Sigmoid colon (tissue), 7 donors: ENCODE measurements at regions of chr4 and their contacts with region 1.

Region 1: GRCh38 chr4:88456757-88457306 is at the start of gene HERC5:
- DNase-seq: peak; percentile 94
- H3K4me3 ChIP-seq: peak within 1 kb of the TSS; percentile 49 to 80 (median 62)
- H3K27ac ChIP-seq: peak within 1 kb of the TSS; percentile 75 to 85 (median 82)
- H3K4me1 ChIP-seq: peaks cover 0 to 9% (median 2%) of the 10 kb centered on the region in 4 donors
- H3K27me3 ChIP-seq: no peaks in the 10 kb centered on the region
- CTCF ChIP-seq: peak; percentile 58 to 67 (median 64)
- EP300 ChIP-seq: peak in 1 of 4 donors; percentile 7
- POLR2A ChIP-seq: peak in 1 of 2 donors; percentile 11
- total RNA-seq, gene HERC5: 4.8 to 7.5 (median 6.0) TPM

Region 2: GRCh38 chr4:88217920-88218319 is 238.9 kb before region 1 on chr4:
- intact Hi-C with region 1: loop called (anchors 2 kb)
- DNase-seq: no peak
- H3K4me3 ChIP-seq: no peak overlapping the region
- H3K27ac ChIP-seq: no peak overlapping the region
- H3K4me1 ChIP-seq: peaks cover 0 to 3% (median 0%) of the 10 kb centered on the region in 4 donors
- H3K27me3 ChIP-seq: no peaks in the 10 kb centered on the region
- CTCF ChIP-seq: no peak
- EP300 ChIP-seq: no peak
- POLR2A ChIP-seq: no peak

Region 3: GRCh38 chr4:88378691-88379559 is 77.9 kb before region 1 on chr4 and contains the start of gene HERC6:
- intact Hi-C with region 1: loop called (anchors 2 kb)
- DNase-seq: peak; percentile 89
- H3K4me3 ChIP-seq: peak within 1 kb of the TSS; percentile 88 to 100 (median 98)
- H3K27ac ChIP-seq: peak within 1 kb of the TSS; percentile 89 to 95 (median 92)
- H3K4me1 ChIP-seq: no peaks in the 10 kb centered on the region
- H3K27me3 ChIP-seq: no peaks in the 10 kb centered on the region
- CTCF ChIP-seq: peak; percentile 60 to 87 (median 70)
- EP300 ChIP-seq: no peak
- POLR2A ChIP-seq: no peak
- total RNA-seq, gene HERC6: 5.7 to 8.6 (median 7.4) TPM

Region 4: GRCh38 chr4:88823058-88823919 is 366.5 kb after region 1 on chr4:
- intact Hi-C with region 1: no loop called
- DNase-seq: peak; percentile 97
- H3K4me3 ChIP-seq: peak overlapping the region; percentile 43 to 60 (median 52)
- H3K27ac ChIP-seq: peak overlapping the region; percentile 82 to 92 (median 88)
- H3K4me1 ChIP-seq: peaks cover 0 to 43% (median 35%) of the 10 kb centered on the region in 4 donors
- H3K27me3 ChIP-seq: no peaks in the 10 kb centered on the region
- CTCF ChIP-seq: no peak
- EP300 ChIP-seq: peak in 2 of 4 donors; percentile 6 to 65
- POLR2A ChIP-seq: peak; percentile 49 to 75

Region 5: DNA sequence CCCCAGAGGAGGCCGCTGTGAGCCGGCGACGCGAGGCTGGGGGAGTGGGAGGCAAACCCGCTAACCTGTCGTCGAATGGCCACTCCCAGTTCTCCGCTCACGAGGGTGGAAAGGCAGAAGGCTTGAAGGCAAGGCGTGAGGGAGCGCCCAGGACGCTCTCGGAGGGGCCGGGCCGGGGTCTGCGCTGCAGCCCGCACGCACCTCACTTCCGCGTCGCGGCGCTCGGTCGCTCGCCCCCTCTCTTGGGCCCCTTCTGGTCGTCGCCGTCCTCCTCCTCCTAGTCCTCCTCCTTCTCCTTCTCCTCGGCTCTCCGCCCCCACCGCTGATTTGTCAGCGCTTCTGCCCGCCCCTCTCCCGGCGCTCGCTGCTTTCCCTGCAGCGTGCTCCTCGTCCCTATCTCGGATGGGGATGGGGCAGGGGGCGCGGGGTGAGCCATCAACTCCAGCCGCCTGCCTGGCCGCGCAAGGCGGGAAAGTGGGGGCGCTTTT is 1380.1 kb after region 1 on chr4 and contains the start of gene SNCA:
- intact Hi-C with region 1: loop called (anchors 10 kb)
- DNase-seq: peak; percentile 90
- H3K4me3 ChIP-seq: peak within 1 kb of the TSS; percentile 31 to 62 (median 52)
- H3K27ac ChIP-seq: peak within 1 kb of the TSS; percentile 54 to 77 (median 70)
- H3K4me1 ChIP-seq: peaks cover 0 to 24% (median 19%) of the 10 kb centered on the region in 4 donors
- H3K27me3 ChIP-seq: peaks cover 9 to 62% (median 10%) of the 10 kb centered on the region in 3 donors
- CTCF ChIP-seq: no peak
- EP300 ChIP-seq: no peak
- POLR2A ChIP-seq: no peak
- total RNA-seq, gene SNCA: 16.8 to 27.0 (median 23.2) TPM